ENCODE measurements at regions of chr6 and their contacts with region 1.

Region 1: DNA sequence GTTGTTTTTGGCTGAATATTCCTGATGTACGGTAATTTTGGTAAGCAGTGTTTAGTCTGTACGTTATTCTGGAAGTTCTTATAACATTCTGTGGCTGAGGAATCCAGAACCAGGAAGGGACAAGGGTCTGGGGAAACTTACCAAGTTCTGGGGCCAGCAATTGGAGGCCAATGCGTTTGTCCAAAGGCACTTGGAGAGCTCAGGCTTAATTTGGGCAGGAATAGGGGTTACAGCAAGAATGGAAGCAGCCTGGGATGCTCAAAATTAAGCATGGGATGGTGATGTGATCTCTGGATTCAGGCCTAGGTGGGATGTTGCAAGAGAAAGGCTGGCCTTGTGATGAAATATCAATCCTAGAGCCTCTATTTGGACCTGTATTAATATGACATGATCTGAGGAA is 235.2 kb upstream of the NOX3 start:
- DNase-seq: no peak
- ATAC-seq: no peak
- H3K4me3 ChIP-seq: no peak overlapping the region
- H3K27ac ChIP-seq: no peak overlapping the region
- H3K4me1 ChIP-seq: no peaks in the 10 kb centered on the region
- H3K27me3 ChIP-seq: no peaks in the 10 kb centered on the region
- CTCF ChIP-seq: no peak
- EP300 ChIP-seq: no peak
- POLR2A ChIP-seq: no peak
- RAD21 ChIP-seq: no peak

Region 2: GRCh38 chr6:155623450-155624178 is 67.2 kb before region 1 on chr6:
- CTCF ChIA-PET with region 1: no interaction called
- POLR2A ChIA-PET with region 1: no interaction called
- in situ Hi-C with region 1: no loop called
- intact Hi-C with region 1: no loop called
- DNase-seq: no peak
- ATAC-seq: no peak
- H3K4me3 ChIP-seq: no peak overlapping the region
- H3K27ac ChIP-seq: no peak overlapping the region
- H3K4me1 ChIP-seq: no peaks in the 10 kb centered on the region
- H3K27me3 ChIP-seq: no peaks in the 10 kb centered on the region
- CTCF ChIP-seq: no peak
- EP300 ChIP-seq: no peak
- POLR2A ChIP-seq: no peak
- RAD21 ChIP-seq: no peak

Region 3: DNA sequence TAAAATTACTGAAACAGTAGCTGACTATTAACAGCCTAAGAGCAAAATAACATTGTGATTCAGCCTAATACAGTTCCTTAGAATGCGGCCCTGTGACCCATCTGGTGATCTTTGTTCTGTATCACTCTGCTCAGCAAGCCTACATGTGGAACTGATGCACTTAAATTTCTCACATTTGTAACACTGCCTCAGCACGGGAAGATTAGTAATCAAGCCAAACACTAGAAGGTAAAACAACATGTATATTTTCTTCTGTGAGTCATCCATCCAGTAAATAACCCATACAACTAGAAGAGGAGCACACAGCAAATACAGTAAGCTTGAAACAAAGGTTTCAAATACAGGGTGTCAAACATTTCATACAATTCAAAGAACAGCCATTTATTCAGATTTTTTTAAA is 45.5 kb before region 1 on chr6:
- CTCF ChIA-PET with region 1: no interaction called
- POLR2A ChIA-PET with region 1: no interaction called
- in situ Hi-C with region 1: no loop called
- intact Hi-C with region 1: loop called (anchors 1 kb)
- DNase-seq: peak in 1 of 4 experiments; percentile 26
- ATAC-seq: peak; percentile 15; the same call in 1 of the 3 replicates
- H3K4me3 ChIP-seq: no peak overlapping the region
- H3K27ac ChIP-seq: no peak overlapping the region
- H3K4me1 ChIP-seq: peaks cover 0 to 18% of the 10 kb centered on the region in 2 experiments; a peak in 2 of 5 replicates
- H3K27me3 ChIP-seq: no peaks in the 10 kb centered on the region
- CTCF ChIP-seq: no peak
- EP300 ChIP-seq: no peak
- POLR2A ChIP-seq: no peak
- RAD21 ChIP-seq: no peak